Activated naive CD4-positive, alpha-beta T cell treated with anti-CD3 and anti-CD28 coated beads for 36 hours (primary cell): ENCODE measurements at regions of chr11 and their contacts with region 1.

Region 1: DNA sequence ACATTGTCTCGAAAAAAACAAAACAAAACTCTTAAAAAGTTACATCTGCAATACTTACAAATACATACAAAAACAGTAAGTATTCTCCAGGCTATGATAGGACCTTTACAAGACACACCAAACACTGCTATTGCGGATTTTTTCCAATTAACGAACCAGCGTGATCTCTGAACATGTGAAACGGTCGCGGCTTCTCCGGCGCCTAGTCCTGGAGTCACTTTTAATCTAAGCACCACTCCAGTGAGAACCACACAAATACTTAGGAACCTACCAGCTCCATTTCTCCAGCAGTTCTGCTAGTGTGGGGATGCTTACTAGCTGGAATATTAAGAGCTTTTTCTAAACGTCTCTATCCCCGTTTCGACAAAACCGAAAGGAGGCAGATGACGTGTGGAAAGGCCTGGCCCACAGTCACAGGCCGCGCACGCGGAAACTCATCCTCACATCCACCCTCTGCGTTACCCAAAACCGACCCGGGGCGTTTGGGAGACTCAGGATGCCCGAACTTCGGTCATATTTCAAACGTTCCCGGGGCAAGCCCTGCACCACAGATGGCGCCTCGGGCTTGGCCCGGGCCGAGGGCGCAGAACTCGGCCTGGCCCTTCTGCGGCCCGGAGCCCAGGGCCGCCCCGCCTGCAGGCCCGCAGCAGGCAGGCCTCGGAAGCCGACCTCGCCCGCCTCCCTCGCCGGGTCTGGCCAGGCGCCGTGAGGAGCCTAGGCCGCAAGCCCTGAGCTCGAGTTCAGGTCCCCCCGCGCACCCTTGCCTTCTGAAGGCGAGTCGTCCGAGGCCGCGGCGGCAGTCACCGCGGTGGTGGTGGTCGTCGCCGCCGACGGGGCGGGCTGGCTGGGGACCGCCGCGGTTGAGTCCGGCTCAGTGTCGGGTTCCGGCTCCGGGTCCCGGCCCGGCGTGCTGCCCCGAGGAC is 575 bp downstream of the FNBP4 start:
- DNase-seq: peak; percentile 85
- H3K4me3 Mint-ChIP-seq: peak overlapping the region; percentile 99
- H3K27ac Mint-ChIP-seq: peak overlapping the region; percentile 100
- H3K4me1 Mint-ChIP-seq: peaks cover 18% of the 10 kb centered on the region
- H3K27me3 Mint-ChIP-seq: no peaks in the 10 kb centered on the region

Region 2: DNA sequence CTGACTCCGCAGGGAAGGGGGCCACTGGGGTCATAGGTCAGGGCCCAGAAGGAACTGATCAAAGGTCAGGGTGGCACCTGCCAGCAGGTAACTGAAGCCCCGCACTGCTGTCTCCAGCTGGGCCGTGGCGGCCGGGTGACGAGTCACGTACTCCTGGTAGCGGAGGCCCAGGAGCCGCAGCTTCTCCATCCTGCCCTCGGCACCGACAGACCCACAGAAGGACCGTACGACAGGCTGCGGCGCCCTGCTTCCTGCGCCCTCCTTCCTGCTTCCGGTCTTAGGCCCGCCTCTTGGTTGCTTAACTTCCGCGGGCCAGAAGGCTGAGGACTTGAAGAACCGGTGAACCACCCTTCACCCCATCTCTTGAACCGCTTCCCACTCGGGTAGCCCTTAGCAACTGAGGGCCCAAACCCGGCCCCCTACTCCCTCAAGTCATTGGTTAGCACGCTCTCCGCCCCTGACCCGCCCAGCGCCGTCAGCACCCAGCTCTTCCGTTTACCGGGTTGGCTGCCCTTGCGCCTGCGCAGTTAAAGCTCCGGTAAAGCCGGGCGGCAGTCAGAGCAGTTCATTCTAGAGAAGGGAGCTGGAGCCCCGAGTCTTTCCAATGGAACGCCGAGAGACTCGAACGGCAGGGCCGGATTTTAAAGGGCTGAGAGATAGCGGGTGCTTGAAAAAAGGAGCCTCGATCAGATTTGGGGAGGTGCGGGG is 1848.8 kb before region 1 on chr11 and contains the start of gene PEX16:
- CTCF ChIA-PET with region 1: no interaction called
- intact Hi-C with region 1: loop called (anchors 5 kb)
- DNase-seq: peak; percentile 96
- H3K4me3 Mint-ChIP-seq: peak within 1 kb of the TSS; percentile 88
- H3K27ac Mint-ChIP-seq: peak within 1 kb of the TSS; percentile 96
- H3K4me1 Mint-ChIP-seq: peaks cover 24% of the 10 kb centered on the region
- H3K27me3 Mint-ChIP-seq: peaks cover 3% of the 10 kb centered on the region
- total RNA-seq, gene PEX16: 28.6 to 32.5 TPM

Region 3: DNA sequence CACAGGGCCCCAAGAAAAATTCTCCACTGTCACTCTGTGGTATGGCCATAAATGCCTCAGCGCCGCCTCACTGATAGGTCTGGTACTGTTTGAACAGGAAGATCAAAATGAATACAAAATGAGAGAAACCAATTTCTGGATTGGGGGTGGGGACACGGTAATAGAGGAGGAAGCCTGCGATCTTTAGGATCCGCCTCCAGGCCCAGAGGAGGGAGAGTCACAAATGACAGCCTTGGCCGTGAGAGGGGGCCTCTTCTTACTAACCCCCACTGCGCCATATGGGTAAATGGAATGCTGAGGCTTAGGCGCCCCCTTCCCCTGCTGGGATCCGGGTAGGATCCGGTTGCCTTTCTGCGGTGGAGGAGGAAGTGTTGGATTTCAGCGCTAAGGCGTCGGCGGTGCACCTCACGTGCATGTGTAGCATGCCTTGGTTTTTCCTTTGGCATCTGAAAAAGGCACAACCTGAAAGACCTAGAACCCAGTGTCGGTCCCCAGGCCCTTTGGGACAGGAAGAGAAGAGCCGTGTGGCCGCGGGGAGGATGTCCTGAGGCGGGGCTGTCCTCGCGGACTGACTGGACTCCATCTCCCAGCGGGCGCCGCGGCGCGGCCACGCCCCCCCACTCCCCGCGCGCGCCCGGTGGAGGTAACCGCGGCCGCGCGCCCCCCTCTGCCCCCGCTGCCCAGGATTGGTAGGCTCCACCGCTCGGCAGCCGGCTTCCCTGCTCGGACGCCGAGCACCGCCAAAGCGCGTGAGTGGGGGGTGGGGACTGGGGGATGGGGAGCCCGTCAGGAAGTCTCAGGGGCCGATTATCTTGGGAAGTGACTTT is 497.4 kb before region 1 on chr11:
- CTCF ChIA-PET with region 1: no interaction called
- intact Hi-C with region 1: loop called (anchors 1 kb)
- DNase-seq: peak; percentile 91
- H3K4me3 Mint-ChIP-seq: peak overlapping the region; percentile 85
- H3K27ac Mint-ChIP-seq: peak overlapping the region; percentile 98
- H3K4me1 Mint-ChIP-seq: peaks cover 55% of the 10 kb centered on the region
- H3K27me3 Mint-ChIP-seq: no peaks in the 10 kb centered on the region

Region 4: GRCh38 chr11:47538741-47539574 is 227.6 kb before region 1 on chr11:
- CTCF ChIA-PET with region 1: no interaction called
- intact Hi-C with region 1: loop called (anchors 1 kb)
- DNase-seq: no peak
- H3K4me3 Mint-ChIP-seq: no peak overlapping the region
- H3K27ac Mint-ChIP-seq: peak overlapping the region; percentile 91
- H3K4me1 Mint-ChIP-seq: peaks cover 64% of the 10 kb centered on the region
- H3K27me3 Mint-ChIP-seq: no peaks in the 10 kb centered on the region

Region 5: GRCh38 chr11:47642099-47642855 is 124.3 kb before region 1 on chr11 and contains the start of gene MTCH2:
- CTCF ChIA-PET with region 1: no interaction called
- intact Hi-C with region 1: loop called (anchors 1 kb)
- DNase-seq: peak; percentile 97
- H3K4me3 Mint-ChIP-seq: peak within 1 kb of the TSS; percentile 91
- H3K27ac Mint-ChIP-seq: peak within 1 kb of the TSS; percentile 81
- H3K4me1 Mint-ChIP-seq: peaks cover 19% of the 10 kb centered on the region
- H3K27me3 Mint-ChIP-seq: no peaks in the 10 kb centered on the region
- total RNA-seq, gene MTCH2: 93.7 to 95.1 TPM

Region 6: DNA sequence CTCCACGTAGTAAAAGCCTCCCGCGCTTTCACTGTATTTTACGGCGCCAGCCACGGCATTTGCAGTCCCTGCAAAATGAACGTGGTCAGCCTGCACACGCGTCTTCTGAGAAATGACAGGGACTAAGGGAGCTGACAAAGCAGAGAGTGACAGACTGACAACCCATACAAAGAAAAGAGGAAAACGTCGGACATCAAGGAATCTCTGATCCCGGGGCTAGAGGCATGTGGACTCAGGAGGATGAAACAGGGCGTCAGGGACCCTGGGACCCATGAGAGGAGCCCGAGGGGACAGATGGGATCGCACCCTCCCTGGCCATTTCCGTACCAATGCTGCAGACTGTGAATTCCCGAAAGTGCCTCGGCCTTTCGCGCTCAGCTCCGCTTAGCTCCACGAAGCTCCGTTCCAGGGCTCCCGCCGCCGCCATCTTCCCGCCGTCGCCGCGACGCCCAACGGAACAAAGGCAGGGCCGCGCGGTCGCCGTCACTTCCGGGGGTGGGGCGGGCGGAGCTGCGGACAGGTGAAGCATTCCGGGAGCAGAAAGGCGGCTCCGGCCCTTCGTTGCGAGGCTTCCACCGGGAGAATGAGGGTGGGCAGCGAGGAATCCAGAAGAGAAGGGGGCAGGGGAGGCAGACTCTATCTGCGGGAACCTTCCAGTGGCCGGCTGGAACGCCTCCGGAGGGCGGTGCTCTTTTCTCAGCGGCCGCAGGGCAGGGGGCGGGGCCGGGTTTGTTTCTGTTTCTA is 81.5 kb after region 1 on chr11 and contains the start of gene NUP160:
- CTCF ChIA-PET with region 1: no interaction called
- intact Hi-C with region 1: loop called (anchors 1 kb)
- DNase-seq: peak; percentile 92
- H3K4me3 Mint-ChIP-seq: peak within 1 kb of the TSS; percentile 93
- H3K27ac Mint-ChIP-seq: peak within 1 kb of the TSS; percentile 92
- H3K4me1 Mint-ChIP-seq: peaks cover 47% of the 10 kb centered on the region
- H3K27me3 Mint-ChIP-seq: no peaks in the 10 kb centered on the region
- total RNA-seq, gene NUP160: 64.7 to 64.8 TPM